MCF 10A (cell line): ENCODE measurements at regions of chr20 and their contacts with region 1.

Region 1: DNA sequence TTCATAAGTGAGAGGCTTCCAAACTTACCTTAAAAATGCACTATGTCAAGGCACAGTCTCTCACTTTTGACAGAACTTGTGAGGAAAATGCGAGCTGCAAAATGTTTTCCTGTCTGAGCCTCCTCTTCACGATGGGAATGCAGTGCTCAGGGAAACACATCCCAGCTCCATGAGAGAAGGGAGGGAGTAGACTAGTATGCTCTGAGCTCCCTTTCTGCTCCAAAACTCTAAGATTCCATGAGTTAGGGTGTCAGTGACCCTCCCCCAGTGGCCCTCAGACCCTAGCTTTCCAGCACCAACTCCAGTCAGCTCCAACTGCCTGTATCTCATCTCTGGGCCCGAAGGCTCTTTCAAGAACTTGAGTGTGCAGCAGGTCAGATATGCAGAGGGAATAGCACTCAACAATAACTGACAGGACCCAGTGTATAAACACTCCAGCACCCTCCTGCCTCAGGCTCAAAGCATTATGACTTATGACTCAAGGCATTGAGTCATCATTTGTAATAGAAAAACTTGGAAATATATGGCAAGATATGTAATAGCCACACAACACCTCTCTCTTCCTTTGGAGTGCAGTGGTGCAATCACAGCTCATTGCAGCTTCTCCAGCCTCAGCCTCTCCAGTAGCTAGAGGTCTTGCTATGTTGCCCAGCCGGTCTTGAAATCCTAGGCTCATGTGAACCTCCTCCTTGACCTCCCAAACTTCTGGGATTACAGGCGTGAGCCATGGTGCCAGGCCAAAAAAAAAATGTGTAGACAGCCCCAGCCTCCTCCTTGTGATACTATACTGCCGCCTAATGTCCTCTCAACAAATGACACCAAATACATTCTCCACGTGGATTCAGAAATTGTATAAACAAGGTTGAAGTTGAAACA is 16.7 kb upstream of the ENTPD6 start:
- DNase-seq: peak; percentile 96
- H3K4me3 Mint-ChIP-seq: no peak overlapping the region
- H3K27ac Mint-ChIP-seq: peak overlapping the region; percentile 0
- H3K4me1 Mint-ChIP-seq: peaks cover 27% of the 10 kb centered on the region
- H3K27me3 Mint-ChIP-seq: no peaks in the 10 kb centered on the region
- CTCF ChIP-seq: peak; percentile 77

Region 2: GRCh38 chr20:24684956-24685691 is 493.7 kb before region 1 on chr20:
- CTCF ChIA-PET with region 1: no interaction called
- POLR2A ChIA-PET with region 1: no interaction called
- intact Hi-C with region 1: no loop called
- DNase-seq: no peak
- H3K4me3 Mint-ChIP-seq: no peak overlapping the region
- H3K27ac Mint-ChIP-seq: no peak overlapping the region
- H3K4me1 Mint-ChIP-seq: no peaks in the 10 kb centered on the region
- H3K27me3 Mint-ChIP-seq: no peaks in the 10 kb centered on the region
- CTCF ChIP-seq: no peak

Region 3: DNA sequence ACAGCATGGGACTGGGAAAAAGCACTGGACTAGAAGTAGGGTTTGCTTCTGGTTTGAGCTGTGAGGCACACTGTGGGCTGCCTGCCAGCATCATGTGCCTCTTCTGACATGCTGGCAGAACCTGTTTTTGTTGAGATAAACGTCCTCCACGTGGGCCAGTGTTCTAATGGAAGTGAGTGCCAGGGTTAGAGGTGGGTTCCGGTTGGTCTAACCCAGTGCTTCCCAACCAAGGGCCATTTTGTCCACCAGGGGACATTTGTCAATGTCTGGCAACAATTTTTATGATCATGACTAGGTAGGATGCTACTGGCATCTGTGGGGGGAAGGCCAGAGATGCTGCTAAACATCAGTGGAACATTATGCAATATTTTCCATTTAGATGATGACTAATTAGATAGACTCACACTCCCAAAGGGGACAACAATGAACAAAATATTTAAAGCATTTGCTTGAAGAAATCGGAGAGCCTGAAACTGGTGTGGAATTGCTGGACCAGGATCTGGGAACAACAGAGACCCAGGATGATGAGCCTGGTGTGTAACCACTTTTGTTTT is 178.5 kb before region 1 on chr20:
- CTCF ChIA-PET with region 1: interaction called, 92 read pairs
- POLR2A ChIA-PET with region 1: interaction called, 57 read pairs
- intact Hi-C with region 1: loop called (anchors 1 kb)
- DNase-seq: peak; percentile 73
- H3K4me3 Mint-ChIP-seq: no peak overlapping the region
- H3K27ac Mint-ChIP-seq: peak overlapping the region; percentile 84
- H3K4me1 Mint-ChIP-seq: peaks cover 38% of the 10 kb centered on the region
- H3K27me3 Mint-ChIP-seq: peaks cover 12% of the 10 kb centered on the region
- CTCF ChIP-seq: no peak

Region 4: GRCh38 chr20:25058872-25059810 is 119.7 kb before region 1 on chr20:
- CTCF ChIA-PET with region 1: interaction called, 44 read pairs
- POLR2A ChIA-PET with region 1: interaction called, 4 read pairs
- intact Hi-C with region 1: no loop called
- DNase-seq: no peak
- H3K4me3 Mint-ChIP-seq: no peak overlapping the region
- H3K27ac Mint-ChIP-seq: no peak overlapping the region
- H3K4me1 Mint-ChIP-seq: peaks cover 14% of the 10 kb centered on the region
- H3K27me3 Mint-ChIP-seq: peaks cover 43% of the 10 kb centered on the region
- CTCF ChIP-seq: no peak

Region 5: GRCh38 chr20:25076731-25077609 is 101.8 kb before region 1 on chr20:
- CTCF ChIA-PET with region 1: interaction called, 20 read pairs
- POLR2A ChIA-PET with region 1: interaction called, 8 read pairs
- intact Hi-C with region 1: loop called (anchors 1 kb)
- DNase-seq: peak; percentile 86
- H3K4me3 Mint-ChIP-seq: no peak overlapping the region
- H3K27ac Mint-ChIP-seq: no peak overlapping the region
- H3K4me1 Mint-ChIP-seq: peaks cover 13% of the 10 kb centered on the region
- H3K27me3 Mint-ChIP-seq: peaks cover 46% of the 10 kb centered on the region
- CTCF ChIP-seq: peak; percentile 34

Region 6: DNA sequence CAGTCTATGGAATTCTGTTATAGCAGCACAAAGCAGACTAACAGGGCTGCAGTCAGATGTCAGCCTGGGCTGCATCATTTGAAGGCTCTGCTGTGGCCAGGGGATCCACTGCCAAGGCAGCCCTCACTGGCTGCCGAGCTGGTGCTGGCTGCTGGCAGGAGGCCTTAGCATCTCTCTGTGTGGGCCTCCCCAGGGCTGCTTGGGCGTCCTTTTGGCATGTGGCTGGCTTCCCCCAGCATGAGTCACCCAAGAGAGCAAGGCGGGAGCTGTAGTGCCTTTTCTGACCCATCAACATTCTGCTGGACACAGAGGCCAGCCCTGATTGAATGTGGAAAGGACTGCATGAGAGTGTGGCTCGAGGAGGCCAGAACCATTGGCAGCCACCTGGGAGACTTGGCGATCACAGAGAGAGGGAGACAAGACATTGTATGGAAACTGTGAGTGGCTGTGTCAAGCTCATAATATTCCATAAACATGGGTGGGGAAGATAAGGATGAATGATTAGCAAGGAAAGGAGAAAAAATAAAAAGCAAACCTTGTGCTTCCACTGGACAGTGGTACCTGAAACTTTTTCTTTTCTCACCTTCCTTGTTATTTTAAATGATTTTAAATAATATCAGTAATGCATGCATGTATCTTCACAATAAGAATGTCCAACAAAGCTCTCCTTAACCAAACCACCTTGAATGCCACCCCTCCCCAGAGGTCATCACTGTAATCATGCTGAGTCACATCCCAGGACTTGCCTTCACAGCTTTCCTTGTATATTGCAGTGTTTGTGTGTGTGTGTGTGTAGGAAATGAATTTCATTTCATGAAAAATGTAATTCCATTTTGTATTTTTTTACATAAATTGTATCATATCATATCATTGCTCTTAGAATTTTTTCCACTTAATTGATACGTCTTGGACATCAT is 41.9 kb before region 1 on chr20:
- CTCF ChIA-PET with region 1: interaction called, 7 read pairs
- POLR2A ChIA-PET with region 1: interaction called, 4 read pairs
- intact Hi-C with region 1: loop called (anchors 5 kb)
- DNase-seq: peak; percentile 87
- H3K4me3 Mint-ChIP-seq: no peak overlapping the region
- H3K27ac Mint-ChIP-seq: no peak overlapping the region
- H3K4me1 Mint-ChIP-seq: peaks cover 13% of the 10 kb centered on the region
- H3K27me3 Mint-ChIP-seq: peaks cover 18% of the 10 kb centered on the region
- CTCF ChIP-seq: no peak

Region 7: DNA sequence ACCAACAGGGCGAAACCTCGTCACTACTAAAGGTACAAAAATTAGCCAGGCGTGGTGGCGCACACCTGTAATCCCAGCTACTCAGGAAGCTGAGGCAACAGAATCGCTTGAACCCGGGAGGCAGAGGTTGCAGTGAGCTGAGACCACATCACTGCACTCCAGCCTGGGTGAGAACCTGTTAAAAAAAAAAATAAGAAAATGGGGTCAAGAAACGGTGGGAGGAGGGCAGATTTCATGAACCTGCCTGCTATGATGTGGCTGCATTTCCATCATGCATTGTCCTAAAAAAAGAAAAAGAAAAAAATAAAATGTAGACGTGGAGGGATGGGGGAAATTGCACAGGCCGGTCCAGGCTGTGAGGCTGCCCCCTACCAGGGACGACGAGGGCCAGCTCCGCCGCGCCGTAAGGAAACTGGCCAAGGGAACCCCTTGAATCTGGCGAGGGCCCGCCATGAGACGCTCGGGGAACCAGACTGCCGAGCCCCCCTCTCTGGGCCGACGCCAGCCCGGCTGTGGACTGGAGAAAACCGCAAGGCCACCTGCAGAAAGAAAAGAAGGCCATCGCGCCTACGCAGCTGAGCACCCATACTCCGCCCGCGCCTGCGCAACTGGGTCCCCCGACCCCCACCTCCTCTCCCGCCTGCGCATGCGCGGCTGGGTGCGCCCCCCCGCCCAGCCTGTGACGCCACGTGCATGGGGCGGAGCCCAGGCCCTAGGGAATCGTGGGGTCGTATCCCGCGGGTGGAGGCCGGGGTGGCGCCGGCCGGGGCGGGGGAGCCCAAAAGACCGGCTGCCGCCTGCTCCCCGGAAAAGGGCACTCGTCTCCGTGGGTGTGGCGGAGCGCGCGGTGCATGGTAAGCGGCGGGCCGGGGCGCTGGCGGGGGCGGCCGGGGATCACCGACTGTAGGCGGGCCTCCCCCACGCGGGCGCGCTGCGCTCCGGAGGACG is 16.5 kb after region 1 on chr20 and contains the start of gene ENTPD6:
- CTCF ChIA-PET with region 1: interaction called, 37 read pairs
- POLR2A ChIA-PET with region 1: interaction called, 20 read pairs
- intact Hi-C with region 1: no loop called
- DNase-seq: peak; percentile 86
- H3K4me3 Mint-ChIP-seq: peak within 1 kb of the TSS; percentile 77
- H3K27ac Mint-ChIP-seq: peak within 1 kb of the TSS; percentile 5
- H3K4me1 Mint-ChIP-seq: peaks cover 28% of the 10 kb centered on the region
- H3K27me3 Mint-ChIP-seq: no peaks in the 10 kb centered on the region
- CTCF ChIP-seq: no peak
- total RNA-seq, gene ENTPD6: 98.0 and 99.5 TPM in 2 replicates

Region 8: DNA sequence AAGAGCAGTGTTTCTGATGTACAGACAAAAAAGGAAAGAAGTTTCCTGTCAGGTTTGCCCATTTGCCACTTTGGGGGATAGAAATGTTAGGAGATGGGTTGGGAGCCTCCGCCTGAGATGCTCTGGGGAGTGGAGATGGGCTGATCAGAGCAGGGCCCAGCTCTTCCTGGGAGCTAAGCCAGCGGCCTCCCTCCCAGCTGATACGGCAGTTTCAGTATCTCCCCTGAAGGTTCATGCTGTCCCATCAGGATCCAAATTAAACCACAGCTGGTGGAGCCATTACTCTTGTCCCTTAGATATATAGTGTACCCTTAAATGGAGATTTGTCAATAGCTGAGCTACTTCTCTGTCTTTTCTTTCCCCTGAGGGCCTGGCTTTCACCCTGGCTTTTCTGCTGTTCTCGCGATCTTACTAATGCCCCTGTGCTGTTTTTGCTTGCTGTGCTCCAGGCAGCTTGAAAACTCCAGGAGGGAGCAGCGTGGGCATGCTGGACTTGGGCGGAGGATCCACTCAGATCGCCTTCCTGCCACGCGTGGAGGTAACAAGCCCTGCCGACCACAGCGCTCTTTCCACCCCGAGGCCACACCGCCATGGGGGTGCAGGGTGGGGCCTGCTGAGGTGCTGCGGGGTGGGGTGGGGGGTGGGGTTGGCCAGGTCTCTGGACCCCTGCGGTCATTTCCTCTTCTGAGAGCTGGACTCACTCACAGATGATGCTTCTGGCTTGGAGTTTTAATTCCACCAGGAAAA is 37.6 kb after region 1 on chr20:
- CTCF ChIA-PET with region 1: no interaction called
- POLR2A ChIA-PET with region 1: no interaction called
- intact Hi-C with region 1: no loop called
- DNase-seq: no peak
- H3K4me3 Mint-ChIP-seq: no peak overlapping the region
- H3K27ac Mint-ChIP-seq: no peak overlapping the region
- H3K4me1 Mint-ChIP-seq: no peaks in the 10 kb centered on the region
- H3K27me3 Mint-ChIP-seq: no peaks in the 10 kb centered on the region
- CTCF ChIP-seq: no peak